Vagina (tissue), 2 donors: ENCODE measurements at regions of chr7 and their contacts with region 1.

Region 1: GRCh38 chr7:129224251-129225205 is at the start of gene AHCYL2:
- DNase-seq: peak in 1 of 2 donors; percentile 99
- H3K4me3 ChIP-seq: peak within 1 kb of the TSS; percentile 74 to 89
- H3K27ac ChIP-seq: peak within 1 kb of the TSS; percentile 95
- H3K4me1 ChIP-seq: peaks cover 25% of the 10 kb centered on the region
- H3K27me3 ChIP-seq: no peaks in the 10 kb centered on the region
- CTCF ChIP-seq: no peak
- POLR2A ChIP-seq: peak in 1 of 2 donors; percentile 49
- total RNA-seq, gene AHCYL2: 19.6 TPM

Region 2: GRCh38 chr7:129298268-129298893 is 73.9 kb after region 1 on chr7:
- intact Hi-C with region 1: loop called (anchors 5 kb)
- DNase-seq: no peak
- H3K4me3 ChIP-seq: no peak overlapping the region
- H3K27ac ChIP-seq: no peak overlapping the region
- H3K4me1 ChIP-seq: peaks cover 4% of the 10 kb centered on the region
- H3K27me3 ChIP-seq: no peaks in the 10 kb centered on the region
- CTCF ChIP-seq: peak; percentile 35 to 53 (median 46)
- POLR2A ChIP-seq: no peak

Region 3: DNA sequence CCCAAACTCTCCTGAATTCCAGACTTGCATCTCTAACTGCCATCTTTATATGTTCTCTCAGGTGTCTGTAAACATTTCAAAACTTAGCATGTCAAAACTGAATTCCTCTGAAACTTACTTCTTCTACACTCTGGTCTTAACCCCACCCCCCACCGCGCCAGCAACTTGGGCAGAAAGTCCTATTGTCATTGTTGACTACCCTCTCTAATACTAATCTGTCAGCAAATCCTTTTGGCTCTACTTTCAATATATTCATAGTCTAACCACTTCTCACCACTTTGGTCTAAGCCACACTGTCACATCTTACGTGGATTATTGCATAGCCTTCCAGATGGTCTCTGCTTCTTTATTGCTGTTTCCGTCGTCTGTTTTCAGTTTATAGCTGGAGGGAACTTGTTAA is 86.9 kb after region 1 on chr7:
- intact Hi-C with region 1: no loop called
- DNase-seq: no peak
- H3K4me3 ChIP-seq: no peak overlapping the region
- H3K27ac ChIP-seq: no peak overlapping the region
- H3K4me1 ChIP-seq: peaks cover 17% of the 10 kb centered on the region
- H3K27me3 ChIP-seq: no peaks in the 10 kb centered on the region
- CTCF ChIP-seq: no peak
- POLR2A ChIP-seq: no peak